Motor neuron (in vitro differentiated cells): ENCODE measurements at regions of chr22 and their contacts with region 1.

Region 1: GRCh38 chr22:28594797-28595462 is 84.7 kb downstream of the TTC28 start:
- ATAC-seq: peak; percentile 71 to 99 (median 94)
- H3K4me3 ChIP-seq: no peak overlapping the region
- H3K27ac ChIP-seq: no peak overlapping the region
- H3K4me1 ChIP-seq: peaks cover 2 to 5% of the 10 kb centered on the region in 2 donors

Region 2: GRCh38 chr22:28009272-28009827 is 585.6 kb before region 1 on chr22:
- in situ Hi-C with region 1: loop called in 1 of 9 experiments (anchors 25 kb)
- ATAC-seq: peak; percentile 82 to 95 (median 90)
- H3K4me3 ChIP-seq: no peak overlapping the region
- H3K27ac ChIP-seq: no peak overlapping the region
- H3K4me1 ChIP-seq: peaks cover 4 to 5% of the 10 kb centered on the region in 2 donors

Region 3: GRCh38 chr22:28034760-28035401 is 560.0 kb before region 1 on chr22:
- in situ Hi-C with region 1: loop called in 1 of 9 experiments (anchors 25 kb)
- ATAC-seq: peak; percentile 66 to 92 (median 73)
- H3K4me3 ChIP-seq: no peak overlapping the region
- H3K27ac ChIP-seq: peak overlapping the region; percentile 36 to 46
- H3K4me1 ChIP-seq: peaks cover 61 to 63% of the 10 kb centered on the region in 2 donors

Region 4: GRCh38 chr22:28051787-28052356 is 543.1 kb before region 1 on chr22:
- in situ Hi-C with region 1: loop called in 7 of 9 experiments (anchors 10 to 25 kb)
- ATAC-seq: peak; percentile 19 to 69 (median 41)
- H3K4me3 ChIP-seq: no peak overlapping the region
- H3K27ac ChIP-seq: no peak overlapping the region
- H3K4me1 ChIP-seq: peaks cover 9 to 27% of the 10 kb centered on the region in 2 donors

Region 5: DNA sequence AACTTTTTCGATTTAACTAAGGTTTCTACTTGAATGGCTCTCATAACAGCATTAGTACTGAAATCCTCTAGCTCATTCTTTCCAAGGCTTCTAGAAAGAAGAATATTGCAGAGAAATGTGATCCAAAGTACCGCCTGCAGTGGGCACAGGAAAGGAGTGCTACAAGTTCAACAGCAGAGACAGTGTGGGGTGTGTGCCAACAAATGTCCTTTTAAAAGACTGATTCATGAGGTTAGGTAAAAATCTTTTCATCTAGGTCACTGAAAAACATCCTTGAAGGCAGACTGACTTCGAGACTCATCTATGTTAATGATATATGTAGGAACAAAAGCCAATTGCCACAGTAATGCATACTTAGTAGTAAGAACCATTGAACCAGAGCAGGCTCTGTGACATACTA is 326.8 kb before region 1 on chr22:
- in situ Hi-C with region 1: loop called in 1 of 9 experiments (anchors 25 kb)
- ATAC-seq: peak in 1 of 8 experiments; percentile 24
- H3K4me3 ChIP-seq: no peak overlapping the region
- H3K27ac ChIP-seq: no peak overlapping the region
- H3K4me1 ChIP-seq: no peaks in the 10 kb centered on the region